A549 (cell line): ENCODE measurements at regions of chr17 and their contacts with region 1.

Region 1: GRCh38 chr17:73255671-73256181 is 6.0 kb downstream of the CPSF4L start:
- DNase-seq: peak; percentile 62 to 74
- ATAC-seq: peak; percentile 82 to 90
- H3K4me3 ChIP-seq: no peak overlapping the region
- H3K27ac ChIP-seq: peak overlapping the region in 1 of 2 experiments; percentile 11; a peak in 1 of 6 replicates
- H3K4me1 ChIP-seq: no peaks in the 10 kb centered on the region
- CTCF ChIP-seq: peak; percentile 100
- EP300 ChIP-seq: no peak
- POLR2A ChIP-seq: no peak
- RAD21 ChIP-seq: peak; percentile 100

Region 2: GRCh38 chr17:73172252-73172651 is 83.5 kb before region 1 on chr17:
- CTCF ChIA-PET with region 1: no interaction called
- POLR2A ChIA-PET with region 1: no interaction called
- DNase-seq: no peak
- ATAC-seq: no peak
- H3K4me3 ChIP-seq: no peak overlapping the region
- H3K27ac ChIP-seq: no peak overlapping the region
- H3K4me1 ChIP-seq: no peaks in the 10 kb centered on the region
- CTCF ChIP-seq: no peak
- EP300 ChIP-seq: no peak
- POLR2A ChIP-seq: no peak
- RAD21 ChIP-seq: no peak

Region 3: GRCh38 chr17:73192894-73193701 is 62.6 kb before region 1 on chr17 and contains the start of gene COG1:
- CTCF ChIA-PET with region 1: interaction called, 12 read pairs
- POLR2A ChIA-PET with region 1: no interaction called
- DNase-seq: peak; percentile 91 to 96
- ATAC-seq: peak; percentile 72 to 80
- H3K4me3 ChIP-seq: peak within 1 kb of the TSS; percentile 79
- H3K27ac ChIP-seq: peak within 1 kb of the TSS; percentile 88 to 94
- H3K4me1 ChIP-seq: peaks cover 8% of the 10 kb centered on the region; the same call in 1 of the 3 replicates
- CTCF ChIP-seq: no peak
- EP300 ChIP-seq: no peak
- POLR2A ChIP-seq: peak; percentile 74
- RAD21 ChIP-seq: no peak
- polyA plus RNA-seq, gene COG1: 26.0 and 30.6 TPM in 2 replicates

Region 4: DNA sequence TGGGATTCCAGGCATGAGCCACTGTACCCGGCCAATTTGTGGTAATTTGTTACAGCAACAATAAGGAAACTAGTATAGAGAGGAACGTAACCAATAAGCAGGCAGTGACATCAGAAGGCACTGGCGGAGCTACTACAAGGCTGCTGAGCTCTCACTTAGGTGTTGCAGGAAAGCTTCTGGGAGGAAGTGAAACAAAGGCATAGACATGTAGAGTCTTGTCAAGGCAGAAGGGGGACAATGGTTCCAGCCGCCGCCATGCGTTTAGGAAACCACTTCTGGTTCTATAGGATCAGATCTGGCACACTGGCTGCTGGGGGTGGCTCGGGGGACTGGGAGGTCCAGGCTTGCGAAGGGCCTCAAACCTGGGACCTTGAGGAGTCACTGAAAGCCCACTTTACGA is 15.3 kb after region 1 on chr17:
- CTCF ChIA-PET with region 1: interaction called, 68 read pairs
- POLR2A ChIA-PET with region 1: no interaction called
- DNase-seq: no peak
- ATAC-seq: no peak
- H3K4me3 ChIP-seq: no peak overlapping the region
- H3K27ac ChIP-seq: no peak overlapping the region
- H3K4me1 ChIP-seq: no peaks in the 10 kb centered on the region
- CTCF ChIP-seq: no peak
- EP300 ChIP-seq: no peak
- POLR2A ChIP-seq: no peak
- RAD21 ChIP-seq: no peak

Region 5: GRCh38 chr17:73297934-73298861 is 42.5 kb after region 1 on chr17:
- CTCF ChIA-PET with region 1: interaction called, 23 read pairs
- POLR2A ChIA-PET with region 1: no interaction called
- DNase-seq: no peak
- ATAC-seq: peak; percentile 33 to 34; a peak in 4 of 6 replicates
- H3K4me3 ChIP-seq: no peak overlapping the region
- H3K27ac ChIP-seq: peak overlapping the region in 1 of 2 experiments; percentile 37; a peak in 2 of 6 replicates
- H3K4me1 ChIP-seq: peaks cover 59% of the 10 kb centered on the region
- CTCF ChIP-seq: no peak
- EP300 ChIP-seq: no peak
- POLR2A ChIP-seq: no peak
- RAD21 ChIP-seq: no peak

Region 6: GRCh38 chr17:73316919-73317505 is 61.3 kb after region 1 on chr17:
- CTCF ChIA-PET with region 1: interaction called, 77 read pairs
- POLR2A ChIA-PET with region 1: no interaction called
- DNase-seq: no peak
- ATAC-seq: no peak
- H3K4me3 ChIP-seq: no peak overlapping the region
- H3K27ac ChIP-seq: 0 out of 6 replicates have a peak overlapping the region, but pooled peaks of 1 of the 2 experiments have one; percentile 18
- H3K4me1 ChIP-seq: peaks cover 10% of the 10 kb centered on the region
- CTCF ChIP-seq: no peak
- EP300 ChIP-seq: no peak
- POLR2A ChIP-seq: no peak
- RAD21 ChIP-seq: no peak

Region 7: GRCh38 chr17:73387746-73388577 is 132.2 kb after region 1 on chr17:
- CTCF ChIA-PET with region 1: interaction called, 19 read pairs
- POLR2A ChIA-PET with region 1: no interaction called
- DNase-seq: no peak
- ATAC-seq: peak; percentile 10 to 39; a peak in 3 of 6 replicates
- H3K4me3 ChIP-seq: no peak overlapping the region
- H3K27ac ChIP-seq: no peak overlapping the region
- H3K4me1 ChIP-seq: no peaks in the 10 kb centered on the region
- CTCF ChIP-seq: no peak
- EP300 ChIP-seq: no peak
- POLR2A ChIP-seq: no peak
- RAD21 ChIP-seq: no peak

Region 8: GRCh38 chr17:74176546-74177001 is 920.8 kb after region 1 on chr17:
- CTCF ChIA-PET with region 1: interaction called, 11 read pairs
- POLR2A ChIA-PET with region 1: no interaction called
- DNase-seq: peak; percentile 74 to 76
- ATAC-seq: peak; percentile 88 to 96
- H3K4me3 ChIP-seq: no peak overlapping the region
- H3K27ac ChIP-seq: no peak overlapping the region
- H3K4me1 ChIP-seq: no peaks in the 10 kb centered on the region
- CTCF ChIP-seq: peak; percentile 95
- EP300 ChIP-seq: no peak
- POLR2A ChIP-seq: no peak
- RAD21 ChIP-seq: peak; percentile 97 to 98